Activated CD4-positive, alpha-beta T cell treated with anti-CD3 and anti-CD28 coated beads for 36 hours (primary cell): ENCODE measurements at regions of chr12 and their contacts with region 1.

Region 1: DNA sequence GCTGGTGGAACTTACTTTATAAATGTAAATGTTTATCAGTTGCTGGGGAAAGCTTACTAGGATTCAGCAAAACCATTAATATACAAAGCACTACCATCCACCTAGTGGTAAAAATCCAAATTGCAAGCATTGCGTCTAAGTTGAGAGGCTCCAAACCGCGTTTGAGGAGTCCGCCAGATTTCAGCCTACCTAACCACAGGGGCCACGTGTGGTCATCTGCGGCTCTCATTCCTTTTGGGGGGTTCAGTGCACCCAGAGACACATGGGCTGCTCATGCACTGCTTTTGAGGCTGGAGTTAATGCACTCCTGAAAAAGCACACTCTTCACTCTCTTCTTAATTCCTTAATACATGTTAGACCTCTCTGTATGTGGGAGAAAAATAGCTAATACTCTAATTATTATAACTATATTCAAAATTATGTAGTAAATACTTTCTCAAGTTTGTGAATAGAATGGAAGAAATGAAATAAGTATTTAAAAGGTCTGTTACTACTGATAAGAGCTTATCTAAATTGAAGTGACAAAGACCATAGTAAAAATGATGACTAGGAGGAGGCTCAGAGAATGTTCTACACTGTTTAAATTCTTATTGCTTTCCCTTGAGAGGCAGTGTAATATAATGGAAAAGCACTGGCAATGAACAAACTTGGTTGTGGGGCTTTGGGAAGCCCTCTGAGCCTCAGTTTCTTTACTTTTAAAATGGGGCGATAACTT is 41.4 kb upstream of the MANSC4 start:
- DNase-seq: peak; percentile 38
- ATAC-seq: no peak
- H3K4me3 Mint-ChIP-seq: no peak overlapping the region
- H3K27ac Mint-ChIP-seq: no peak overlapping the region
- H3K4me1 Mint-ChIP-seq: peaks cover 33% of the 10 kb centered on the region
- H3K27me3 Mint-ChIP-seq: peaks cover 49% of the 10 kb centered on the region

Region 2: GRCh38 chr12:26287671-26288381 is 1533.6 kb before region 1 on chr12:
- CTCF ChIA-PET with region 1: no interaction called
- POLR2A ChIA-PET with region 1: no interaction called
- intact Hi-C with region 1: no loop called
- DNase-seq: no peak
- ATAC-seq: no peak
- H3K4me3 Mint-ChIP-seq: no peak overlapping the region
- H3K27ac Mint-ChIP-seq: no peak overlapping the region
- H3K4me1 Mint-ChIP-seq: peaks cover 8% of the 10 kb centered on the region
- H3K27me3 Mint-ChIP-seq: no peaks in the 10 kb centered on the region

Region 3: DNA sequence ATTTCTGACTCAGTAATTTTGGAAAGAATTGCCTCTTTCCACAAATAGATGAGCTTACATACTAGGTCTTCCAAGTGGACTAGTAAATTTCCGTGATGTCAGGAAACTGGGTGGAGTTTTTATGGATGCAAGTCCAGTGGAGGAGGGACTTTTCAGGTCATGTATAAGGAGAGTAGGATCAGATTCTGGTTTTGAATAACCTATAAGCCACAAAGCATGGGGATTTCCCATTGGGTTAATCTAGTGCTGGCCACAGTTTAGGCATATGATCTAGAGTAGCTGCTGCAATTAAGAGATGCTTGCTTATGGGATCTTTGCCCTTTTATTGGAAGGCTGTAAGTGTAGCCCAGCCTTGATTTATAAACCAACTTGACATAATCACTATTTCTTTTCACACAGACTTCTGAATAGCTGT is 543.6 kb before region 1 on chr12:
- CTCF ChIA-PET with region 1: no interaction called
- POLR2A ChIA-PET with region 1: no interaction called
- intact Hi-C with region 1: no loop called
- DNase-seq: peak; percentile 14
- ATAC-seq: peak; percentile 87
- H3K4me3 Mint-ChIP-seq: no peak overlapping the region
- H3K27ac Mint-ChIP-seq: peak overlapping the region; percentile 5
- H3K4me1 Mint-ChIP-seq: peaks cover 31% of the 10 kb centered on the region
- H3K27me3 Mint-ChIP-seq: no peaks in the 10 kb centered on the region

Region 4: DNA sequence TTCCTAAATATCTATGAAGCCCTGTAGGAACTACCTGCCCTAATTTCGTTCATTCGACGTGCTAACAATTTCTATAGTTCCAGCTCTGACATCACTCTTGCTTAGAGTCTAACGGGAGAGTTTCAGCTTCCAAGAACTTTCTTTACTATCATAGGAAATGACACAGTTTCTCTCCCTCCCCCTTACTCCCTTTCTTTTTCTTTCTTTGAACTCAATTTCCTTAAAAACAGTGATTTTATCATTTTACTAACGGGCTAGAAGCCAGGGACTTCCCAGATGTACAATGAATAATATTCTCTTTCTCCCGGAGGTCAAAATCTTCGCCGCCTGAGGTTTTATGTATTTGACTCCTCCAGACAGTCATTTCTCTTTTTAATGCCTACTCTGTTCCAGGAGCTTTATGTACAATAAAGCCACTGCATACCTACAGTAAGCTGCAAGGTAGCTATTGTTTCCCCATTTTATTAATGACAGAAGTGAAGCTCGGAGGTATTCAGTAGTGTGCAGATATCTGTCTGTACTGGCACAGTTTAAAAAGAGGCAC is 359.2 kb before region 1 on chr12:
- CTCF ChIA-PET with region 1: no interaction called
- POLR2A ChIA-PET with region 1: no interaction called
- intact Hi-C with region 1: loop called in 1 of 2 experiments (anchors 5 kb)
- DNase-seq: peak; percentile 35
- ATAC-seq: peak; percentile 51
- H3K4me3 Mint-ChIP-seq: no peak overlapping the region
- H3K27ac Mint-ChIP-seq: no peak overlapping the region
- H3K4me1 Mint-ChIP-seq: peaks cover 54% of the 10 kb centered on the region
- H3K27me3 Mint-ChIP-seq: peaks cover 14% of the 10 kb centered on the region

Region 5: GRCh38 chr12:27733052-27733656 is 88.3 kb before region 1 on chr12:
- CTCF ChIA-PET with region 1: interaction called, 35 read pairs
- POLR2A ChIA-PET with region 1: no interaction called
- intact Hi-C with region 1: loop called (anchors 1 kb)
- DNase-seq: peak; percentile 60
- ATAC-seq: peak; percentile 42
- H3K4me3 Mint-ChIP-seq: no peak overlapping the region
- H3K27ac Mint-ChIP-seq: no peak overlapping the region
- H3K4me1 Mint-ChIP-seq: no peaks in the 10 kb centered on the region
- H3K27me3 Mint-ChIP-seq: no peaks in the 10 kb centered on the region

Region 6: DNA sequence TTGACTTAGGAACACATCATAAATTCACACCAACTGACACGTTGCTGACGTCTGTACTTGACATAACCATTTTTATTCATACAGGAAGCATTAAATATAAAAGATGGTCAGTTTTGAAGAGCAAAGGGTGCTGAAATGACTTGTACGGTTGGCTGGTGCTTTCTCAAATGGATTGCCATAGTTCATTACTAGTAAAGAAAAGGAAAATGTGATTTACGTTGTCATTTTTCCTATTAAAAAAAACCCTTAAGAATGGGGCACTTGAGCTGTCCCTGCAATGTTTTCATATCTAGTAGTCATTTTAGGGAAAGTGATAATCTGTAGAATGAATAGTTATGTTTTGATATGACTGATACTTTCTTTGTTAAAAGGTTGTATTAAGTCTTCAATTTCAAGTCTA is 18.9 kb before region 1 on chr12:
- CTCF ChIA-PET with region 1: interaction called, 79 read pairs
- POLR2A ChIA-PET with region 1: interaction called, 14 read pairs
- intact Hi-C with region 1: loop called (anchors 1 kb)
- DNase-seq: peak; percentile 29
- ATAC-seq: peak; percentile 71
- H3K4me3 Mint-ChIP-seq: no peak overlapping the region
- H3K27ac Mint-ChIP-seq: no peak overlapping the region
- H3K4me1 Mint-ChIP-seq: peaks cover 50% of the 10 kb centered on the region
- H3K27me3 Mint-ChIP-seq: peaks cover 13% of the 10 kb centered on the region

Region 7: GRCh38 chr12:27843714-27844245 is 22.4 kb after region 1 on chr12:
- CTCF ChIA-PET with region 1: no interaction called
- POLR2A ChIA-PET with region 1: no interaction called
- intact Hi-C with region 1: no loop called
- DNase-seq: no peak
- ATAC-seq: no peak
- H3K4me3 Mint-ChIP-seq: no peak overlapping the region
- H3K27ac Mint-ChIP-seq: no peak overlapping the region
- H3K4me1 Mint-ChIP-seq: no peaks in the 10 kb centered on the region
- H3K27me3 Mint-ChIP-seq: peaks cover 12% of the 10 kb centered on the region

Region 8: DNA sequence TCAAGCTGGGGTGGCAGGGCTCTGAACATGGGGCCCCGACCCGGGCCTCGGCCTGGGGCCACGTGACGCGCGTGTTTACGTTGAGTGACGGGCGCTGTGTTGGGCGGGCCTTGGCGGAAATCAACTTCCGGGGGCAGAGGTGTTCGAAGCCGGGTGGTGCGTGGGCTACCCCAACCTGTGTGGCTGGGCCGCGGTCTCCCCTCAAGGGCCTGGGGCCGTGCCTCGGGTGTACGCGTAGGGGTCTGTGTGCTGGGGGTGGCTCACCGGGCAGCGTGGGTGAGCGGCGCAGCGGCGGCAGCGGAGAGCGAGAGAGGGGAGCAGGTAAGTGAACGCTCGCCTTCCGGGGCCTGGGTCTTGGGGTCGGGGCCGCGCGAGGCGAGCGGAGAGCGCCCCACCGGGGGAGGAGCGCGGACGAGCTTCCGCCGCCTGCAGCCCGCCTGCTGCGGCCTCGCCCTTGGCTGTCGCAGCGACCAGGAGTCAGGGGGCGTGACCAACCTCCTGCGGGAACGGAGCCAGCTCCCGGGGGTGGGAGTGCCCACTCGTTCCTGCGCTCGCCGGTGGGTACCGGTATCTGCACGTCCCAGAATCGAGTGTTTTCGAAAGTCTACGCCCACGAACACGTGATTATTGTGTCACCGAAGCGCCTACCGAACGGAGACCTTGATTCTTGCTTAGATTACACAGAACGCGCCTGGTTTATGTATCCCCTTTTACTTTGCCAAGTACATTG is 369.1 kb after region 1 on chr12 and contains the start of gene CCDC91:
- CTCF ChIA-PET with region 1: interaction called, 9 read pairs
- POLR2A ChIA-PET with region 1: no interaction called
- intact Hi-C with region 1: loop called in 1 of 2 experiments (anchors 2 kb)
- DNase-seq: peak; percentile 93
- ATAC-seq: peak; percentile 83
- H3K4me3 Mint-ChIP-seq: peak within 1 kb of the TSS; percentile 89
- H3K27ac Mint-ChIP-seq: peak within 1 kb of the TSS; percentile 99
- H3K4me1 Mint-ChIP-seq: peaks cover 65% of the 10 kb centered on the region
- H3K27me3 Mint-ChIP-seq: no peaks in the 10 kb centered on the region
- total RNA-seq, gene CCDC91: 13.9 to 16.0 TPM

Region 9: GRCh38 chr12:28497889-28498411 is 676.5 kb after region 1 on chr12:
- CTCF ChIA-PET with region 1: no interaction called
- POLR2A ChIA-PET with region 1: no interaction called
- intact Hi-C with region 1: loop called in 1 of 2 experiments (anchors 5 kb)
- DNase-seq: peak; percentile 4
- ATAC-seq: peak; percentile 96
- H3K4me3 Mint-ChIP-seq: no peak overlapping the region
- H3K27ac Mint-ChIP-seq: no peak overlapping the region
- H3K4me1 Mint-ChIP-seq: peaks cover 16% of the 10 kb centered on the region
- H3K27me3 Mint-ChIP-seq: no peaks in the 10 kb centered on the region